Breast epithelium (tissue), 4 donors: ENCODE measurements at regions of chr1 and their contacts with region 1.

Region 1: DNA sequence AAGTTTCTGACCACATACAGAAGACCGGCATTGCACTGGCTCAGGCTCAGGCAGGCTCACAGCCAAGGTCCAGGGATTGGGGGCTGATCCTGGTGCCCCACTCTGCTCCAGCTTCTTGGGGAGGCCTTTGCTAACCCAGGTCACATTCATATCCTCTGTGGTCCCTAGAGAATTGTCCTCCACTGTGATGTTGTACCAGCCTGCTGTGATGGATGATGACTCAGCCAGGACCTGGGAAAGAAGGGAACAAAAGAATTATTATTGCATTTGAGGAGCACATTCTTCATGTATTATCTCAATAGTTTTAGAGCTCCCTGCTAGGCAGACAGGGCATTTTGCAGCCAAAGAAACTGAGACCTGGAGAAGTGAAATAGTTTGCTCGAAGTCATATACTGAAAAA is 114.3 kb upstream of the ETV3 start:
- DNase-seq: no peak
- H3K4me3 ChIP-seq: no peak overlapping the region
- H3K27ac ChIP-seq: no peak overlapping the region
- H3K4me1 ChIP-seq: no peaks in the 10 kb centered on the region
- H3K27me3 ChIP-seq: no peaks in the 10 kb centered on the region
- CTCF ChIP-seq: no peak
- POLR2A ChIP-seq: no peak

Region 2: GRCh38 chr1:157562515-157562914 is 310.0 kb after region 1 on chr1:
- intact Hi-C with region 1: loop called (anchors 5 kb)
- DNase-seq: no peak
- H3K4me3 ChIP-seq: no peak overlapping the region
- H3K27ac ChIP-seq: no peak overlapping the region
- H3K4me1 ChIP-seq: no peaks in the 10 kb centered on the region
- H3K27me3 ChIP-seq: no peaks in the 10 kb centered on the region
- CTCF ChIP-seq: no peak
- POLR2A ChIP-seq: no peak